ENCODE measurements at regions of chr1 and their contacts with region 1.

Region 1: GRCh38 chr1:172002725-172003345 is 161.5 kb downstream of the DNM3 start:
- DNase-seq: peak; percentile 43
- H3K4me3 ChIP-seq: no peak overlapping the region
- H3K27ac ChIP-seq: no peak overlapping the region
- H3K27me3 ChIP-seq: no peaks in the 10 kb centered on the region
- CTCF ChIP-seq: peak; percentile 89

Region 2: GRCh38 chr1:171984850-171985485 is 17.9 kb before region 1 on chr1:
- CTCF ChIA-PET with region 1: interaction called, 31 read pairs
- POLR2A ChIA-PET with region 1: no interaction called
- DNase-seq: no peak
- H3K4me3 ChIP-seq: no peak overlapping the region
- H3K27ac ChIP-seq: no peak overlapping the region
- H3K27me3 ChIP-seq: no peaks in the 10 kb centered on the region
- CTCF ChIP-seq: peak; percentile 89

Region 3: DNA sequence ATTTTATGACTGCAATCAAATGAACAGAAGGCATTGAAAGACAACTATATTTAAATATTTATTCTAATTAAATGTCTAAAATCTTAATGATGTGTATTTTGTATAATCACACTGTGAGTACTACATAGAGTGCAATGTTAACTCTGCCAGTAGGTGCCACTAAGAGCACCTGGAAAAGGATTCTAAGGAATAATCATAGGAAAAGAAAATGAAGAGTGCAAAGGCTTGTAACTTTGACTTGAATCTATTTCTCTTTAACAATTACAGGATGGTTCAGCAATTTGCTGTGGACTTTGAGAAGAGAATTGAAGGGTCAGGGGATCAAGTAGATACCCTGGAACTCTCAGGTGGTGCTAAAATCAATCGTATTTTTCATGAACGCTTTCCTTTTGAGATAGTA is 38.9 kb after region 1 on chr1:
- CTCF ChIA-PET with region 1: interaction called, 15 read pairs
- POLR2A ChIA-PET with region 1: interaction called, 3 read pairs
- DNase-seq: no peak
- H3K4me3 ChIP-seq: no peak overlapping the region
- H3K27ac ChIP-seq: no peak overlapping the region
- H3K27me3 ChIP-seq: no peaks in the 10 kb centered on the region
- CTCF ChIP-seq: peak; percentile 56

Region 4: GRCh38 chr1:172149346-172149745 is 146.5 kb after region 1 on chr1:
- CTCF ChIA-PET with region 1: interaction called, 17 read pairs
- POLR2A ChIA-PET with region 1: no interaction called
- DNase-seq: no peak
- H3K4me3 ChIP-seq: no peak overlapping the region
- H3K27ac ChIP-seq: no peak overlapping the region
- H3K27me3 ChIP-seq: no peaks in the 10 kb centered on the region
- CTCF ChIP-seq: no peak

Region 5: GRCh38 chr1:172299515-172299914 is 296.7 kb after region 1 on chr1:
- CTCF ChIA-PET with region 1: no interaction called
- POLR2A ChIA-PET with region 1: no interaction called
- DNase-seq: no peak
- H3K4me3 ChIP-seq: no peak overlapping the region
- H3K27ac ChIP-seq: no peak overlapping the region
- H3K27me3 ChIP-seq: no peaks in the 10 kb centered on the region
- CTCF ChIP-seq: no peak

Region 6: DNA sequence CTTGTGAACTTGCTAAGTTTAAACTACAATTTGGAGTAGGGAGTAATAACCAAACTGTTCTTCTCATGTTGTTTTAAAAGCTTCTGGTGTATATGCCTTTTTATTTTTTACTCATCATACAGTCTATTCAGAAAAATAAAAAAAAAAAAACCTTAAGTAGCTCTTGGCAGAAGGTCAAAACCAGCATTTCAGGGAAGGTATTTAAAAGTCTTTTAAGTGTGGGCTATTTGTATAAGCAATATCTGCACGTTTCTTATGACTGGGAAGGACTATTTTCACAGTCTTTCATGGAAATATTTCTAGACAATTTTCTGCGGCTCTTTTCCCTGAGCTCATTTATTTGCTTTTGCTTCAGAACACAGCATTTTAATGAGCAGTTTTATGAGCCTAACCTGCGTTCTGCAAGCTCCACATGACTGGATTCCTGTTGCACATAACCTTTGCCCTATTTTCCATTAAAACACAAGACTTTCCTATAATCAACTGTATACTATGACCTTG is 356.7 kb after region 1 on chr1:
- CTCF ChIA-PET with region 1: interaction called, 14 read pairs
- POLR2A ChIA-PET with region 1: no interaction called
- DNase-seq: no peak
- H3K4me3 ChIP-seq: no peak overlapping the region
- H3K27ac ChIP-seq: no peak overlapping the region
- H3K27me3 ChIP-seq: no peaks in the 10 kb centered on the region
- CTCF ChIP-seq: no peak

Region 7: GRCh38 chr1:172417552-172417951 is 414.7 kb after region 1 on chr1:
- CTCF ChIA-PET with region 1: interaction called, 16 read pairs
- POLR2A ChIA-PET with region 1: no interaction called
- DNase-seq: no peak
- H3K4me3 ChIP-seq: no peak overlapping the region
- H3K27ac ChIP-seq: no peak overlapping the region
- H3K27me3 ChIP-seq: no peaks in the 10 kb centered on the region
- CTCF ChIP-seq: no peak

Region 8: GRCh38 chr1:172449585-172450534 is 447.0 kb after region 1 on chr1:
- CTCF ChIA-PET with region 1: interaction called, 26 read pairs
- POLR2A ChIA-PET with region 1: no interaction called
- DNase-seq: peak; percentile 4
- H3K4me3 ChIP-seq: no peak overlapping the region
- H3K27ac ChIP-seq: no peak overlapping the region
- H3K27me3 ChIP-seq: peaks cover 4% of the 10 kb centered on the region
- CTCF ChIP-seq: peak; percentile 92

Measured in AG04450 (cell line).